HepG2 (cell line): ENCODE measurements at regions of chr5 and their contacts with region 1.

Region 1: GRCh38 chr5:81171769-81172168 is 61.4 kb upstream of the CKMT2 start:
- DNase-seq: no peak
- ATAC-seq: no peak
- H3K4me3 ChIP-seq: no peak overlapping the region
- H3K27ac ChIP-seq: no peak overlapping the region
- H3K4me1 ChIP-seq: no peaks in the 10 kb centered on the region
- H3K27me3 ChIP-seq: no peaks in the 10 kb centered on the region
- CTCF ChIP-seq: no peak
- EP300 ChIP-seq: no peak
- POLR2A ChIP-seq: no peak
- RAD21 ChIP-seq: no peak

Region 2: DNA sequence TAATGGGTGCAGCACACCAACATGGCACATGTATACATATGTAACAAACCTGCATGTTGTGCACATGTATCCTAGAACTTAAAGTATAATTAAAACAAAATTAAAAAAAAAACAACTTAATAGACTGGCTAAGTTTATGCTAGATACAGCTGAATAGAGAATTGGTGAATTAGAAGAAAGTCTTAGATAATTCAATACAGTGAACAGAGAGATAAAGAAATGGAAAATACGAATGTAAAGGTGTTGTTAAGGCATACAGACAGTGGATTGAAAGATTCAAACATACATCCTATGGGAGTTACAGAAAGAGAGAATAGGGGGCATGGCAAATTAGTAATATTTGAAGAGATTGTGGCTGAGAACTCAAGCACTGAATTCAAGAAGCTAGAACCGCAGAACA is 136.2 kb before region 1 on chr5:
- CTCF ChIA-PET with region 1: no interaction called
- POLR2A ChIA-PET with region 1: no interaction called
- in situ Hi-C with region 1: no loop called
- intact Hi-C with region 1: no loop called
- DNase-seq: no peak
- ATAC-seq: no peak
- H3K4me3 ChIP-seq: no peak overlapping the region
- H3K27ac ChIP-seq: no peak overlapping the region
- H3K4me1 ChIP-seq: no peaks in the 10 kb centered on the region
- H3K27me3 ChIP-seq: no peaks in the 10 kb centered on the region
- CTCF ChIP-seq: no peak
- EP300 ChIP-seq: no peak
- POLR2A ChIP-seq: no peak
- RAD21 ChIP-seq: no peak

Region 3: GRCh38 chr5:81132381-81132780 is 39.4 kb before region 1 on chr5:
- CTCF ChIA-PET with region 1: no interaction called
- POLR2A ChIA-PET with region 1: no interaction called
- in situ Hi-C with region 1: no loop called
- intact Hi-C with region 1: loop called (anchors 2 kb)
- DNase-seq: no peak
- ATAC-seq: no peak
- H3K4me3 ChIP-seq: no peak overlapping the region
- H3K27ac ChIP-seq: no peak overlapping the region
- H3K4me1 ChIP-seq: no peaks in the 10 kb centered on the region
- H3K27me3 ChIP-seq: no peaks in the 10 kb centered on the region
- CTCF ChIP-seq: no peak
- EP300 ChIP-seq: no peak
- POLR2A ChIP-seq: no peak
- RAD21 ChIP-seq: no peak

Region 4: GRCh38 chr5:81212211-81212751 is 40.5 kb after region 1 on chr5:
- CTCF ChIA-PET with region 1: no interaction called
- POLR2A ChIA-PET with region 1: no interaction called
- in situ Hi-C with region 1: no loop called
- intact Hi-C with region 1: no loop called
- DNase-seq: no peak
- ATAC-seq: peak; percentile 51
- H3K4me3 ChIP-seq: no peak overlapping the region
- H3K27ac ChIP-seq: no peak overlapping the region
- H3K4me1 ChIP-seq: no peaks in the 10 kb centered on the region
- H3K27me3 ChIP-seq: no peaks in the 10 kb centered on the region
- CTCF ChIP-seq: no peak
- EP300 ChIP-seq: no peak
- POLR2A ChIP-seq: no peak
- RAD21 ChIP-seq: no peak

Region 5: DNA sequence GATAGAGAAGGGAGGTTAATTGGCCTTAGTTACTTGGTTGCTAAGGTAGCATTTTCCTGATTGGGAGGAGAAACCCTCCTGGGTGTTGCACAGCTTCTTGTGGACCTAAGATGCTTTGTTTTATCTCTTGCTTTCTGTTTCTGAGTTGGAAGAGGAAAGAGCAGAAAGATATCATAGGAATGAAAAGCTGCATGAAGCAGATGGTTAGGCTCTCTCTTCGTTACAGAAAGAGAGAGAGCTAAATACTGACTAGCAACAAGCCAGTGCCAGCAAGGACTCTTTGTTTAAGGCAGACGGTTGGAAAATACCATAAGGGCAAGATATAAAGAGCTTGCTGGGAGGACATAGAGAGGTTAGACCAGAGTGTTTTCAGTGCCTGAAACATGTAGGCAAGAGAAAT is 903.2 kb after region 1 on chr5:
- CTCF ChIA-PET with region 1: no interaction called
- POLR2A ChIA-PET with region 1: no interaction called
- in situ Hi-C with region 1: no loop called
- intact Hi-C with region 1: no loop called
- DNase-seq: no peak
- ATAC-seq: no peak
- H3K4me3 ChIP-seq: no peak overlapping the region
- H3K27ac ChIP-seq: no peak overlapping the region
- H3K4me1 ChIP-seq: 0 out of 2 replicates have a peak, but pooled peaks cover 4% of the 10 kb centered on the region
- H3K27me3 ChIP-seq: no peaks in the 10 kb centered on the region
- CTCF ChIP-seq: no peak
- EP300 ChIP-seq: no peak
- POLR2A ChIP-seq: no peak
- RAD21 ChIP-seq: no peak